Activated CD4-positive, alpha-beta T cell treated with anti-CD3 and anti-CD28 coated beads for 36 hours (primary cell): ENCODE measurements at regions of chr3 and their contacts with region 1.

Region 1: DNA sequence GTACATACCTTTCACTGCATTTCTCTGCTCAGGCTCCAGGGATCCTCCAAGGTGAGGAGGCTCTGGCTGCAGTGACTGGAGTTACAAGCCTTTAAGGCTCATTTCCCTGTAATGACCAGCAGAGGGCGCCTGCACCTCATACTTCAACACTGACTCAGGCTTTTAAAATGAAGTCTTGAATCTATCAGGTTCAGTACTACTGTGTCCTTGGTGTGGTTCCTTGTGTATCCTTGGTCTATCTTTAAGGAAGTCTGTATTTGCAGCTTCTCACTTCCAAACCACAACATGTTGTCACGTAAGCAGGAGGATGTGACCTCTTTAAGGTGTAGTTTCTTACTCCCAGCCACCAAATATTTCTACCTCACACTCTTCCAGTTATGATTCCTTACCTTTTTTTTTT is 122.5 kb upstream of the ZBED2 start:
- DNase-seq: peak; percentile 82
- ATAC-seq: peak; percentile 96
- H3K4me3 Mint-ChIP-seq: no peak overlapping the region
- H3K27ac Mint-ChIP-seq: no peak overlapping the region
- H3K4me1 Mint-ChIP-seq: peaks cover 4% of the 10 kb centered on the region
- H3K27me3 Mint-ChIP-seq: no peaks in the 10 kb centered on the region

Region 2: GRCh38 chr3:110821586-110821985 is 896.0 kb before region 1 on chr3:
- CTCF ChIA-PET with region 1: no interaction called
- POLR2A ChIA-PET with region 1: no interaction called
- intact Hi-C with region 1: no loop called
- DNase-seq: no peak
- ATAC-seq: no peak
- H3K4me3 Mint-ChIP-seq: no peak overlapping the region
- H3K27ac Mint-ChIP-seq: no peak overlapping the region
- H3K4me1 Mint-ChIP-seq: no peaks in the 10 kb centered on the region
- H3K27me3 Mint-ChIP-seq: peaks cover 8% of the 10 kb centered on the region

Region 3: DNA sequence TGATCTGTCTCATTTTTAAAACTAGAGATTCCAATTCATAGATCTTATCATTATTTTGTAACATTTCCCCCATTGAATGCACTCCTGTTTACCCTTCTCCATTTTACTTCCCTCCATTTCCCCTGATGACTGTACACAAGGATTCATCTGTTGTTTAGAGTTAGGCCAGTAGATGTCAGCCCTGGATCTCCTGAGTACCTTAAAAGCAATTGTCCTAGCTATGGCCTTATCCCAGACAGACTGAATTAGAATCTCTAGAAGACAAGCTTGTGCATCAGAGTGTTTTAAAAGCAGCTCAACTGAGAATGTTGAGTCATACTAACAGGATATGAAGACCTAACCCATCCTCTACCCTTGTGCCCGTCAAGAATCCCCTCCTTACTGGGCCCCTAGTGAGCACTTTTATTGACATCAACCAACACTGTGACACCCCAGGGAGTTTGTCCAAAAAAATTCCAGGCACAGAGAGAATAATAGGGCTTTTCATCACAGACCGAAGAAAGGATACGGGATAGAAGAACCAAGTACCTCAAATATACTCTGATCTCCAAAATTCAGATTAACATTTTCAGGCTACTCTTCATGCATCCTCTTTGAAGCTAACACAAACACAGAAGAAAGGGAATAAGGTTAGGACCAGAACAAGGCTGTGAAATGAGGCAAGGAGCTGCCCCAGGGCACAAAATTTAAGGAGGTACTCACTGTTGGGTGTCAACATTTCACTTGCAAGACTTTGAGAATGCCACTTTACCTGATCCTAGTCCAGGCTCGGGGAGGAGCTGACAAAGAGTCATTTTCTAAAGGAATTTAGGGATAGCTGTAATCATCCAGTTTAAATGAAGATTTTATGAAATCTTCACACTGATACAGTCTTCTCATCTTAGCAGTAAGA is 139.6 kb before region 1 on chr3:
- CTCF ChIA-PET with region 1: interaction called, 10 read pairs
- POLR2A ChIA-PET with region 1: no interaction called
- intact Hi-C with region 1: no loop called
- DNase-seq: no peak
- ATAC-seq: peak; percentile 84
- H3K4me3 Mint-ChIP-seq: no peak overlapping the region
- H3K27ac Mint-ChIP-seq: peak overlapping the region; percentile 72
- H3K4me1 Mint-ChIP-seq: peaks cover 75% of the 10 kb centered on the region
- H3K27me3 Mint-ChIP-seq: no peaks in the 10 kb centered on the region

Region 4: GRCh38 chr3:111859974-111860859 is 142.6 kb after region 1 on chr3:
- CTCF ChIA-PET with region 1: interaction called, 7 read pairs
- POLR2A ChIA-PET with region 1: no interaction called
- intact Hi-C with region 1: loop called (anchors 1 to 5 kb)
- DNase-seq: peak; percentile 66
- ATAC-seq: peak; percentile 66
- H3K4me3 Mint-ChIP-seq: peak overlapping the region; percentile 82
- H3K27ac Mint-ChIP-seq: peak overlapping the region; percentile 29
- H3K4me1 Mint-ChIP-seq: peaks cover 11% of the 10 kb centered on the region
- H3K27me3 Mint-ChIP-seq: peaks cover 36% of the 10 kb centered on the region

Region 5: GRCh38 chr3:111972891-111973290 is 255.3 kb after region 1 on chr3:
- CTCF ChIA-PET with region 1: interaction called, 181 read pairs
- POLR2A ChIA-PET with region 1: no interaction called
- intact Hi-C with region 1: no loop called
- DNase-seq: no peak
- ATAC-seq: no peak
- H3K4me3 Mint-ChIP-seq: no peak overlapping the region
- H3K27ac Mint-ChIP-seq: no peak overlapping the region
- H3K4me1 Mint-ChIP-seq: no peaks in the 10 kb centered on the region
- H3K27me3 Mint-ChIP-seq: no peaks in the 10 kb centered on the region

Region 6: DNA sequence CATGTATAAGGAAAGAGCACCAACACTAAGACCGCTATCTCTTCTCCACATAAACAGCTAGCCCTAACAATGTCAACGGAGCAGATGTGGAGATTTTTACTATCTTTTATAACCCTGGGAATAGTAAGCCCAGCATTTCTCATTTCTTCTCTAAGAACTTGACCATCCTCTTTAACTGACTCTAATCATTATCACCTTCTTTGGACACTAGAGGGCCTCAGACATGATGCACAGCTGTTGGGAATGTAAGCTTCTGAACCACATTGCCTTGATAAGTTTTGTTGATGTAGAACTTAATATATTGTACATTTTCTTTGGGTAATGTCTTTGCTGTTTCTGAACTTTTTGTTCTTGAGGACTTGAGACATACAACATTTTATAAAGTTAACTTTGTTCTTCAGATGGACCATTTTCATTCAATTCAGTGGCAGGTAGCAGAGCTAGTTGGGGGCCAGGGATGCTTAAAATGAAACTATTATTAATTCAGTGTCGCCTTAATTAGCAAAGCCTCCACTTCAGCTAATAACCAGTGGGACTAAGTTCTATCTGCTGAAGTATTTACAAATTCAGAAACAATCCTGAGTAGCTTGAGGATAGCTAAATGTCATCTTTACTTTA is 271.6 kb after region 1 on chr3:
- CTCF ChIA-PET with region 1: interaction called, 10 read pairs
- POLR2A ChIA-PET with region 1: no interaction called
- intact Hi-C with region 1: no loop called
- DNase-seq: no peak
- ATAC-seq: peak; percentile 69
- H3K4me3 Mint-ChIP-seq: no peak overlapping the region
- H3K27ac Mint-ChIP-seq: no peak overlapping the region
- H3K4me1 Mint-ChIP-seq: peaks cover 36% of the 10 kb centered on the region
- H3K27me3 Mint-ChIP-seq: no peaks in the 10 kb centered on the region

Region 7: GRCh38 chr3:112043603-112044201 is 326.1 kb after region 1 on chr3:
- CTCF ChIA-PET with region 1: interaction called, 9 read pairs
- POLR2A ChIA-PET with region 1: no interaction called
- intact Hi-C with region 1: loop called (anchors 1 to 2 kb)
- DNase-seq: peak; percentile 69
- ATAC-seq: peak; percentile 96
- H3K4me3 Mint-ChIP-seq: no peak overlapping the region
- H3K27ac Mint-ChIP-seq: no peak overlapping the region
- H3K4me1 Mint-ChIP-seq: peaks cover 4% of the 10 kb centered on the region
- H3K27me3 Mint-ChIP-seq: no peaks in the 10 kb centered on the region